Sigmoid colon (tissue), 7 donors: ENCODE measurements at regions of chr6 and their contacts with region 1.

Region 1: DNA sequence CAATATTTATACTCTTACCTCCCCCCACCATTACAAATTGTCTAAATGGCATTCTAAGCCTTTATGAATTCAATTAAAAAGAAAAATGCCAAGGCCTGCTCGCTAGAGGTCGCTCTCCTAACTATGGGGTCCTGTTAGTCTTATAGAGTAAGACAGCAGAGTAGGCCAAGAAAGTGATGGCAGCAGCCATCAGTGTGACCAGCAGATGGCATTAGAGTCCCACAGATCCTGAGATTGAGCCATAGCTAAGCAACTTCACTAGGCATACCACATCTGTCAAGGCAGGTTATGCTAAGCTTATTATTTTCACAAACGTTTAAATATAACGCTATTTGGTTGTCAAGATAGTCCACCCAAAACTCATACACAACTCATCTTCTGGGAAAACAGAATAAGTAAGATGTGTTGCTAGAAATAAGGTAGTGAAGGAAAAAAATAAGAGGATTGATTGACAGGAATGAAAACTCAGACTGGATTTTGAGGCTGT is 57.6 kb upstream of the SCAF8 start:
- DNase-seq: peak; percentile 92
- H3K4me3 ChIP-seq: no peak overlapping the region
- H3K27ac ChIP-seq: no peak overlapping the region
- H3K4me1 ChIP-seq: peaks cover 0 to 3% (median 0%) of the 10 kb centered on the region in 4 donors
- H3K27me3 ChIP-seq: no peaks in the 10 kb centered on the region
- CTCF ChIP-seq: peak; percentile 96 to 99 (median 98)
- EP300 ChIP-seq: no peak
- POLR2A ChIP-seq: no peak

Region 2: GRCh38 chr6:154733012-154733625 is 57.5 kb after region 1 on chr6 and contains the start of gene SCAF8:
- intact Hi-C with region 1: loop called (anchors 2 kb)
- DNase-seq: peak; percentile 87
- H3K4me3 ChIP-seq: peak within 1 kb of the TSS; percentile 74 to 98 (median 98)
- H3K27ac ChIP-seq: peak within 1 kb of the TSS; percentile 96 to 100 (median 100)
- H3K4me1 ChIP-seq: peaks cover 0 to 46% (median 44%) of the 10 kb centered on the region in 4 donors
- H3K27me3 ChIP-seq: no peaks in the 10 kb centered on the region
- CTCF ChIP-seq: peak in 2 of 4 experiments; percentile 19 to 84
- EP300 ChIP-seq: peak in 1 of 4 donors; percentile 1
- POLR2A ChIP-seq: peak in 1 of 2 donors; percentile 35
- total RNA-seq, gene SCAF8: 37.1 to 46.3 (median 40.8) TPM

Region 3: GRCh38 chr6:154805288-154805911 is 129.8 kb after region 1 on chr6:
- intact Hi-C with region 1: loop called (anchors 1 kb)
- DNase-seq: no peak
- H3K4me3 ChIP-seq: no peak overlapping the region
- H3K27ac ChIP-seq: no peak overlapping the region
- H3K4me1 ChIP-seq: no peaks in the 10 kb centered on the region
- H3K27me3 ChIP-seq: no peaks in the 10 kb centered on the region
- CTCF ChIP-seq: peak in 3 of 4 experiments; percentile 9 to 32 (median 24)
- EP300 ChIP-seq: no peak
- POLR2A ChIP-seq: no peak

Region 4: GRCh38 chr6:154824076-154824475 is 148.4 kb after region 1 on chr6:
- intact Hi-C with region 1: no loop called
- DNase-seq: no peak
- H3K4me3 ChIP-seq: no peak overlapping the region
- H3K27ac ChIP-seq: no peak overlapping the region
- H3K4me1 ChIP-seq: peaks cover 0 to 25% (median 15%) of the 10 kb centered on the region in 4 donors
- H3K27me3 ChIP-seq: no peaks in the 10 kb centered on the region
- CTCF ChIP-seq: no peak
- EP300 ChIP-seq: no peak
- POLR2A ChIP-seq: no peak

Region 5: DNA sequence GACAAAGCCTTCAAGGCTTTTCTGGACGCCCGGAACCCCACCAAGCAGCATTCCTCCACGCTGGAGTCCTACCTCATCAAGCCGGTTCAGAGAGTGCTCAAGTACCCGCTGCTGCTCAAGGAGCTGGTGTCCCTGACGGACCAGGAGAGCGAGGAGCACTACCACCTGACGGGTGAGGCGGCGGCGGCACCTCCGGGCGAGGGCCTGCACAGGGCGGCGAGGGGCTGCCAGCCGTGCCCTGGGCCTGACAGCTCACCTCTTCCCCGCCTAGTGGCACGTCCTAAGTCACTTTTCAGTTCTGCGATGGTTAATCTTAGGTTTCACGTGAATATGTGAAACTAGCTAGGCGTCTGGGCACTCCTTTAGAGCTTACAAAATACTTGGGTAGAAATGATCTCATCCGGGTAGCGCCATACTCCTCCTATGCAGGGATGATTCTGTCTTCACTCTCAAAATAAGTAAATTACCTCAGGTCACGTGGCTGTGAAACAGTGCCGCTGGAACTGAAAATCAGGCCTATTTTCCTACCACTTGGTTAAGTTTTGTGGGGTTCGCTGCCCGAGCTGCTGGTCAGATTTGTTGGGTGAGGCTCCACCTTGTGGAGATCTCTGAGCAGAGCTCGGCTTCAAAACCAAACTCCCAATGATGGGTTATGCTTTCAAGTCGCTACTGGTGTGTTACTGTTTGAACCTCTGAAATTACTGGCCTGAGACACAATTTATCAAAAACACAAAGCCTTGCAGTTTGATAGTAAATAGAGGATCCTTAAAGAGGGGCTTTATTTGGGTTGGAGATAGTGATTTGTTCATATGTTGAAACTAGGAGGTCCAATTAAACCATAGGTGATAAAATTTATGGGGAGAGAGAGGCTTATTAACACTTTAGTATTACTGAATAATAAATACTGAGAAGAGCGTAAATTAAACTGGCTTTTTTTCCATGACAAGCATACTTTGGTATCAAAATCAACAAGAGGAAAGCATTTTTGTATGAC is 572.7 kb after region 1 on chr6:
- intact Hi-C with region 1: loop called (anchors 10 kb)
- DNase-seq: peak; percentile 84
- H3K4me3 ChIP-seq: peak overlapping the region in 1 of 4 donors; percentile 11
- H3K27ac ChIP-seq: peak overlapping the region; percentile 48 to 83 (median 72)
- H3K4me1 ChIP-seq: peaks cover 0 to 21% (median 9%) of the 10 kb centered on the region in 4 donors
- H3K27me3 ChIP-seq: no peaks in the 10 kb centered on the region
- CTCF ChIP-seq: peak; percentile 59 to 78 (median 72)
- EP300 ChIP-seq: no peak
- POLR2A ChIP-seq: no peak